ENCODE measurements at regions of chrX and their contacts with region 1.

Region 1: GRCh38 chrX:70001269-70001668 is 48.5 kb downstream of the AWAT2 start:
- DNase-seq: peak; percentile 33 to 45
- ATAC-seq: peak; percentile 46 to 92 (median 90)
- H3K4me3 ChIP-seq: no peak overlapping the region
- H3K27ac ChIP-seq: peak overlapping the region in 8 of 10 donors; percentile 52 to 71 (median 58)
- H3K4me1 ChIP-seq: peaks cover 0 to 8% (median 0%) of the 10 kb centered on the region in 9 donors
- H3K27me3 ChIP-seq: peaks cover 0 to 26% (median 0%) of the 10 kb centered on the region in 7 donors
- CTCF ChIP-seq: no peak

Region 2: DNA sequence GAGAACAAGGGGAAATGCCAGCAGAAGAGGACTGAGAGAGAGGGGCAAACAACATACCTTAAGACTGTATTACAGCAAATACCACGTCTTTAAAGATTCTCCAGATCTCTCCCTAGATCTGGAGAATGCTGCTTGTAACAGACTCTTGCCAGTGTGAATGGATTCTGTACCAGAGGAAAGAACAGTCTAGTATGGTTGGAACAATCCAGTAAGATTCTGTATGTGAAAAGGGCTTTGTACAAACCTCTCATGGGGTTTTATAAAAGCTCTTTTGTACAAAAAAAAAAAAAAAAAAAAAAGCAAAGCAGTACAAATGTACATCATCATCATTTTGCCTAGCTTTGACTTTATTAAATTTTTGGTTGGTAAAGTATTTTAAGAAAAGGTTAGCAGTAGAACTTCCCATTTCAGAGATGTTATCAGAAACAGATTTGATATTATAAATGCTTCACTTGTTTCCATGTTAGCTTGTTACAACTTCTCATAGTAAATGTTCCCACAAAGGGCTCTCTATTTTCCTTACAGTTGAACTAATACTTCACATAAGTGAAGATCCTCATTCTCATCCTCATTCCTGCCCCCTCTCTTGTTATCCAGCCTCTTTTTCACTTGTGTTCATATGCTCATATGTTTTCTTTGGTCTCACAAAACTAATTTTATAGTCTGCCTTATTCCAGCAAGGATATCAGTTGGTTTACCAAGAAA is 241.2 kb before region 1 on chrX:
- intact Hi-C with region 1: loop called in 1 of 10 experiments (anchors 10 kb)
- DNase-seq: no peak
- ATAC-seq: no peak
- H3K4me3 ChIP-seq: no peak overlapping the region
- H3K27ac ChIP-seq: no peak overlapping the region
- H3K4me1 ChIP-seq: peaks cover 0 to 8% (median 0%) of the 10 kb centered on the region in 9 donors
- H3K27me3 ChIP-seq: no peaks in the 10 kb centered on the region
- CTCF ChIP-seq: no peak

Region 3: GRCh38 chrX:69793260-69793935 is 207.9 kb before region 1 on chrX:
- intact Hi-C with region 1: no loop called
- DNase-seq: no peak
- ATAC-seq: no peak
- H3K4me3 ChIP-seq: no peak overlapping the region
- H3K27ac ChIP-seq: no peak overlapping the region
- H3K4me1 ChIP-seq: no peaks in the 10 kb centered on the region
- H3K27me3 ChIP-seq: peaks cover 0 to 24% (median 0%) of the 10 kb centered on the region in 7 donors
- CTCF ChIP-seq: no peak

Region 4: DNA sequence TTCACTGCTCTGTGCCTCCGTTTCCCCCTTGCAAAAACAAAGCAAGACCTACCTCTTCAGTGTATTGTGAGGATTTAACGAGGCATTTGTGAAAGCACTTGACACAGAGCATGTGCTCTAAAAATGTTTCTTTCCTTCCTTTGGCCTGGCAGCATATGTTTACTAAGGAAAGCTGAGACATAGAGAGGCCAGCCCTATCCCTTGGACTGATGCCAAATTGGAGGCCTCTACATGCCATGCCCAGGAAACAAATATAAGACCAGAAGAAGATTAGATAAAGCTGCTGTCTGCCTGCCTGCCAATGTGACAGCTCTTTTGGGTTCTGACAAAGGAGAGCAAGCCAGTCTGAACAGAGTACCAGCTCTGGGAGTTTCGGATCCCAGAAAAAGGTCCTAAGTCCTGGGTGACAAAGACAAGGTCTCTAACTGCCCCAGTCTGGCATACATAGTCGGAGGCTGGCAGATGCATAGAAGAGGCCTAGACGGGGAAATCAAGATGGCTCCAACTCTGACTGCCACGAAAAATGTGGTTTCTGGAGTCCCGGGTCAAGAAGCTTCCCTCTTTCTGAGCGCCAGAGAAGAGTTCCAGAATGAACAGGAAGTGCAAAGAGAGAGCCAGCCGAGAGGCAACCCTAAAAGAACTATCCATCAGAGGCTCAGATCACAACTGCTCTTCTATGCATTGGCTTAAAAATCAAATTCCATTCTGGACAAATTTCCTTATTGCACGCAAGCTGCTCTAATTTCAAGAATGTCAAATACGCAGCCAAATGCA is 86.8 kb after region 1 on chrX:
- intact Hi-C with region 1: no loop called
- DNase-seq: no peak
- ATAC-seq: peak in 5 of 8 donors; percentile 22 to 77 (median 46)
- H3K4me3 ChIP-seq: no peak overlapping the region
- H3K27ac ChIP-seq: peak overlapping the region in 3 of 10 donors; percentile 5 to 36 (median 34)
- H3K4me1 ChIP-seq: peaks cover 0 to 19% (median 3%) of the 10 kb centered on the region in 9 donors
- H3K27me3 ChIP-seq: peaks cover 0 to 14% (median 0%) of the 10 kb centered on the region in 7 donors
- CTCF ChIP-seq: no peak